ENCODE measurements at regions of chr19 and their contacts with region 1.

Region 1: DNA sequence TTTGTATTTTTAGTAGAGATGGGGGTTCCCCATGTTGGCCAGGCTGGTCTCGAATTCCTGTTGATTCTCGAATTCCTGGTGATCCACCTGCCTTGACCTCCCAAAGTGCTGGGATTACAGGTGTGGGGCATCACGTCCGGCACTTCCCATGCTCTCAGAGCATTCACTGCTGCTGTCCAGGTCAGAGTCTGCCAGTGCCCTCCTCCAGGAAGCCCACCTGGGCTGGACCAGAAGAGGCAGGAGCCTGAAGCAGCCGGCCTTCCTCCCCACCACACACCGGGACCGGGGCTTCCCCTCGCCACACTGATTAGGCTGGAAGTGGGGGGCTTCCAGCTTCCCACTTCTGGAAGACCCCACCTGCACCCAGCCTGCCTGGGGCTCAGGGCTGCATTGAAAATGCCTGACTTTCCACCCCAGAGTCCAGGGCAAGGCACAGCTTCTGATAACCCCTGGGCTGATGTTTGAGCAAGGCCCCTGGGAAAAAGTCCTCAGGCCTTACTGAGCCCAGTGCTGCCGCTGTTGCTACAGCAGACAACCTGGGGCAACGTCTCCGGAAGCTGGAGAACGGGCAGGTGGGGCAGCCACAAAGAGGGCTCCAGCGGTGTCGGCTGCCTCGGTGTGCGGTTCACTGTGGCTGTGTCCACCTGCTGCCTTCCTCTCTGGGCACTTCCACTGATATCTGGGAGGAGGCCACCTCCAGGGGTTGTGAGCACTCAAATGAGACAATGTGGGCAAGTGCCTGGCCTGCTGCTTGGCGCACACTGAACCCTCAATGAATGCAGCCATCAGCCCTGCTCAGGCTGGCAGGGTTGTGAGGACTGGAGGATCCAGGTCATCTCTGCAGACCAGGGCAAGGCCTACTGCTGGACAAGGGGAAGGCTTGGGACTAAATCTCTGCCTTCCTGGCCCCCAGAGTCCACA is 22.6 kb downstream of the CEBPA start:
- DNase-seq: peak; percentile 51 to 69
- H3K4me3 ChIP-seq: no peak overlapping the region
- H3K4me3 Mint-ChIP-seq: no peak overlapping the region
- H3K27ac Mint-ChIP-seq: peak overlapping the region; percentile 97
- H3K4me1 ChIP-seq: peaks cover 65% of the 10 kb centered on the region
- H3K4me1 Mint-ChIP-seq: peaks cover 27% of the 10 kb centered on the region
- H3K27me3 ChIP-seq: no peaks in the 10 kb centered on the region
- H3K27me3 Mint-ChIP-seq: no peaks in the 10 kb centered on the region
- CTCF ChIP-seq: no peak

Region 2: GRCh38 chr19:33220115-33220514 is 59.6 kb before region 1 on chr19:
- CTCF ChIA-PET with region 1: no interaction called
- POLR2A ChIA-PET with region 1: no interaction called
- intact Hi-C with region 1: no loop called
- DNase-seq: no peak
- H3K4me3 ChIP-seq: no peak overlapping the region
- H3K4me3 Mint-ChIP-seq: no peak overlapping the region
- H3K27ac Mint-ChIP-seq: no peak overlapping the region
- H3K4me1 ChIP-seq: no peaks in the 10 kb centered on the region
- H3K4me1 Mint-ChIP-seq: no peaks in the 10 kb centered on the region
- H3K27me3 ChIP-seq: no peaks in the 10 kb centered on the region; the same call in 1 of the 2 replicates
- H3K27me3 Mint-ChIP-seq: peaks cover 4% of the 10 kb centered on the region
- CTCF ChIP-seq: no peak

Region 3: DNA sequence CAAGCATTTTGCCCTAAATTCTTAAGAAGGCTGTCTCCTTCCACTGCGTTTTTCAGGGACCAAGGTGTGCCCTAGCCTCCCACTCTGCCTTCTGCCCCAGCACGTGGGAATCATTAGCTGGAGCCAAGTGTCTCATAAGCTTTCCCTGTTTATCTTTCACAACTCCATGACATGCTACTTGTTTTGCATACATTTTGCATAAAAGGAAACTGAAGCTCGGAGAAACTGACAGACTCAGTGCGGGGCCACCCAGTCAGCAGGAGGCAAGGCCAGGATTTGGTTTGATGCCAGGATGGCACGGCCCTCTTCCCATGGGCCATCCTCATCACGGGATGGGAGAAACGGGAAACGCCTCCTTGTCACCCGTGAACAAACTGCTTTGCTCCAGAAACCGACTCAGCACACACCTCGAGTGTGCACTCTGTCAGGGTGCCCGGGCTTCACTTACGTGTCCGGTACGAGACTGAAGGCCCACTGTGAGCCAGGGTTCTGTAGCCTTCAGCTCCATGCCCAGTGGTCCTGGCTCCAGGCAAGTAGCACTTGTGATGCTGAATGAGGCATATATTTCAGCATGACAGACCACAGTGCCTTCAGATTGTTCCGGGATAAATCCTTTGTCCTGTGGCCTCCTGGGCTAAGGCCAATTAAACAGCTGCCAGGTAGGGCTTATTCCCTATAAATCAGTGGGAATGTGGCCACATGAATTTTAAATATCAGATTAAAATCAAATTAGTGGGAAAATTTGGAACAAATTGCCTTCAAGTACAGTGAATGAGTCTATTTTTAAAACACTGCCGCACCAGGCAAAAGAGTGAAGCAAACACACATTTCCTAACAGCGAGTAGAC is 13.1 kb after region 1 on chr19:
- CTCF ChIA-PET with region 1: interaction called, 3 read pairs
- POLR2A ChIA-PET with region 1: interaction called, 3 read pairs
- intact Hi-C with region 1: loop called (anchors 1 kb)
- DNase-seq: no peak
- H3K4me3 ChIP-seq: no peak overlapping the region
- H3K4me3 Mint-ChIP-seq: peak overlapping the region; percentile 69
- H3K27ac Mint-ChIP-seq: peak overlapping the region; percentile 97
- H3K4me1 ChIP-seq: peaks cover 62% of the 10 kb centered on the region
- H3K4me1 Mint-ChIP-seq: peaks cover 41% of the 10 kb centered on the region
- H3K27me3 ChIP-seq: no peaks in the 10 kb centered on the region
- H3K27me3 Mint-ChIP-seq: no peaks in the 10 kb centered on the region
- CTCF ChIP-seq: no peak